Transverse colon (tissue), 4 donors: ENCODE measurements at regions of chr7 and their contacts with region 1.

Region 1: DNA sequence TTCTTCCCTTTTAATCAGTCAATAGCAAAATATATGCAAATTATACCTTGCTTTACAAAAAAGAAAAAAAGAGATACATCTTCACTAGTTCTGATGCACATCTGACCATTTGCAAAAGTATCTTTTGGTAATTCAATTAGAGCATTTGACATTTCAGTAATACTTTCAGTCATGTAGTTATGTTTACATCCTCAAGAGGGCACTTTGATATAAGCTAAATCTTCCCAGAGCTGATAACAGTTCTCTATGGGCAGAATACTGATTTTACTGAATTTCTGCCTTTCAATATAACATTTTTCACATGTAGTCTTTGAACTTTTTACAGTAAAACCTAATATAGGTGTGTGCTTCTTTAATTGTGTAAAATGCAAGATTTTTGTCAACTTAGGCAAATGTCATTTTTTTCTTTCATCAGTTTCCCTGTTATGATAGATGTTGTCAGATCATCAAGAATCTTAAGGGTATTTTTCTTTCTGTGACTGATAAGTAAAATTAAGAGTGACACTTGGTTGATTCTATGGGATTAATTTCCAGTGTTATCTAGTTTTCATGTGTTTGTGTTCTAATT is 703.5 kb upstream of the SEMA3D start:
- DNase-seq: no peak
- H3K4me3 ChIP-seq: no peak overlapping the region
- H3K27ac ChIP-seq: no peak overlapping the region
- H3K4me1 ChIP-seq: no peaks in the 10 kb centered on the region
- H3K27me3 ChIP-seq: no peaks in the 10 kb centered on the region
- CTCF ChIP-seq: peak; percentile 17 to 39 (median 27)
- EP300 ChIP-seq: no peak
- POLR2A ChIP-seq: no peak

Region 2: DNA sequence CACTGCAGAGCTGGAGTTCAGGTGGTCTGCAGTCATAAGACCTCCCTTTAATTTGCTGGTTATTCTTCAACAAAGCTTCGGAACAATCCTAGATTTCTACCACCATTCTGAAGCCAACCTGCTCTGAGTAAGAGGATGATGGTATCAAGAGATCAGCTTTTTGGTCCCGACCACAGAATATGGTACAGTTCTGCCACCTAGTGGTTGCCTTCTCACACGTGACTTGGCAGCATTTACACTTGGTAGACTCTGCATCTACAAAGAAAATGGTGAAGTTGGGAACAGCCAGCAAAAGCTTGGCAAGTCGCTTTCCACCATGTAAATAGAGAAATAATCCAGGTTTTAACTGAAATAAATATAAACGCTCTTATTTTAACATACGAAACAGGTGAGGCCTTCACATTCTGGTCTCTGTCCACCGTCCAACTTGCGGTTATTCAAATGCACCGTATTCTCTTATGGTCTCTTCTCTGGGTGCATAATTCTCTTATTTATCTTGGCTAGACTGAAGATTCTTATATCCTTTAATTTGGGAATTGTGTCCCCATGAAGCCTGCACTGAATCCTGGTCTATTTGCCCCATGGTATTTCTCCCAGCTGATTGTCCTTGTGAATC is 579.5 kb after region 1 on chr7:
- in situ Hi-C with region 1: loop called in 3 of 4 experiments (anchors 25 kb)
- intact Hi-C with region 1: loop called (anchors 5 kb)
- DNase-seq: peak; percentile 39
- H3K4me3 ChIP-seq: no peak overlapping the region
- H3K27ac ChIP-seq: no peak overlapping the region
- H3K4me1 ChIP-seq: no peaks in the 10 kb centered on the region
- H3K27me3 ChIP-seq: no peaks in the 10 kb centered on the region
- CTCF ChIP-seq: peak; percentile 49 to 59 (median 56)
- EP300 ChIP-seq: no peak
- POLR2A ChIP-seq: no peak

Region 3: GRCh38 chr7:86889501-86889900 is 999.2 kb after region 1 on chr7:
- in situ Hi-C with region 1: loop called in 1 of 4 experiments (anchors 25 kb)
- intact Hi-C with region 1: no loop called
- DNase-seq: no peak
- H3K4me3 ChIP-seq: no peak overlapping the region
- H3K27ac ChIP-seq: no peak overlapping the region
- H3K4me1 ChIP-seq: no peaks in the 10 kb centered on the region
- H3K27me3 ChIP-seq: no peaks in the 10 kb centered on the region
- CTCF ChIP-seq: no peak
- EP300 ChIP-seq: no peak
- POLR2A ChIP-seq: no peak